Pancreas (tissue), 10 donors: ENCODE measurements at regions of chr4 and their contacts with region 1.

Region 1: DNA sequence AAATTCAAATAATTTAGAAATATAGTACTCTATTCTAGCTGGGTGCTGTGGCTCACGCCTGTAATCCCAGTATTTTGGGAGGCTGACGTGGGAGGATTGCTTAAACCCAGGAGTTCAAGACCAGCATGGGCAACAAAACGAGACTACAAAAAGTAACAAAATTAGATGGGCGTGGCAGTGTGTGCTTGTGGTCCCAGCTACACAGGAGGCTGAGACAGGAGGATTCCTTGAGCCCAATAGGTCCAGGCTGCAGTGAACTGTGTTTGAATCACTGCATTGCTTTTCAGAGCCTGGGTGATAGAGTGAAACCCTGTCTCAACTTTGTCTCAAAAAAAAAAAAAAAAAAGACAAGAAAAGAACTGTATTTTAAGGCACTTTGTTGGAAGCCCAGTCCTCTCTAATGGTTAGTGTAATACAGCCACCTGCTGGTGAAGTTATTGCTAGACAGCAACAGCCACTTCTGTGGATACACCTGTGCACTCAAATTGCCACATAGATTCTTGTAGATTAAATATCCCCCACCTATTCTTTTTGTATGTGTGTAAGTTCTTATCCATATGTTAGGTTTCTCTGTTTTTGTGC is 10.1 kb upstream of the FGG start:
- DNase-seq: peak in 1 of 6 donors; percentile 30
- ATAC-seq: peak; percentile 47 to 73 (median 66)
- H3K4me3 ChIP-seq: no peak overlapping the region
- H3K27ac ChIP-seq: no peak overlapping the region
- H3K4me1 ChIP-seq: peaks cover 0 to 7% (median 5%) of the 10 kb centered on the region in 3 donors
- H3K27me3 ChIP-seq: no peaks in the 10 kb centered on the region
- CTCF ChIP-seq: peak; percentile 10 to 53 (median 36)

Region 2: GRCh38 chr4:154559494-154560418 is 62.8 kb before region 1 on chr4:
- intact Hi-C with region 1: loop called in 2 of 3 experiments (anchors 2 to 5 kb)
- DNase-seq: peak in 1 of 6 donors; percentile 21
- ATAC-seq: peak; percentile 58 to 96 (median 92)
- H3K4me3 ChIP-seq: no peak overlapping the region
- H3K27ac ChIP-seq: no peak overlapping the region
- H3K4me1 ChIP-seq: peaks cover 0 to 5% (median 0%) of the 10 kb centered on the region in 3 donors
- H3K27me3 ChIP-seq: no peaks in the 10 kb centered on the region
- CTCF ChIP-seq: peak in 3 of 4 donors; percentile 31 to 40 (median 37)